Ascending aorta (tissue), 2 donors: ENCODE measurements at regions of chr2 and their contacts with region 1.

Region 1: GRCh38 chr2:176126929-176127773 is 2.4 kb upstream of the HOXD8 start:
- DNase-seq: peak in 1 of 2 donors; percentile 81
- H3K4me3 ChIP-seq: no peak overlapping the region
- H3K27ac ChIP-seq: no peak overlapping the region
- H3K4me1 ChIP-seq: peaks cover 10 to 17% of the 10 kb centered on the region in 2 donors
- H3K27me3 ChIP-seq: no peaks in the 10 kb centered on the region
- CTCF ChIP-seq: peak; percentile 78 to 89 (median 86)

Region 2: GRCh38 chr2:174797781-174798276 is 1329.3 kb before region 1 on chr2:
- intact Hi-C with region 1: no loop called
- DNase-seq: no peak
- H3K4me3 ChIP-seq: no peak overlapping the region
- H3K27ac ChIP-seq: no peak overlapping the region
- H3K4me1 ChIP-seq: no peaks in the 10 kb centered on the region
- H3K27me3 ChIP-seq: no peaks in the 10 kb centered on the region
- CTCF ChIP-seq: no peak

Region 3: GRCh38 chr2:176079831-176080539 is 47.2 kb before region 1 on chr2:
- intact Hi-C with region 1: loop called (anchors 5 kb)
- DNase-seq: no peak
- H3K4me3 ChIP-seq: peak overlapping the region; percentile 28 to 37
- H3K27ac ChIP-seq: no peak overlapping the region
- H3K4me1 ChIP-seq: no peaks in the 10 kb centered on the region
- H3K27me3 ChIP-seq: peaks cover 75% of the 10 kb centered on the region
- CTCF ChIP-seq: peak; percentile 36 to 58 (median 54)

Region 4: DNA sequence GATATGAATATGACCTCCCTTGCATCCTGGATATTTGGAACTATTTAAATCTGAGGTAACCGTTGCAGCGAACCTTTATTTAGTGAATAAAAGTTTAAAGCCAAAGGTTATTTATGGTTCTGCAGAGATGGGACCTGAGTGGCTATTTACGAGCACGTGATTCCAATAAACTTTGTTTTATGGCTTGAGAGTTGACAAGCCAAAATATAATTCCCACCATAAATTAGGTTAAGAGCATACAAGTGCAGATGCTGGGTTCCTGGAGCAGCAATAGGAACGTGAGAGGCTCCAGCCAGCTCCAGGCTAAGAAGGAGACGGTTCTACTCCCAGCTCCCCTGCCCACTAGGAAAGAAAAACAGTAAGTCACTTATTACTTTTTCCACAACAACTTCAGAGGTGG is 18.9 kb after region 1 on chr2:
- intact Hi-C with region 1: no loop called
- DNase-seq: no peak
- H3K4me3 ChIP-seq: no peak overlapping the region
- H3K27ac ChIP-seq: no peak overlapping the region
- H3K4me1 ChIP-seq: no peaks in the 10 kb centered on the region
- H3K27me3 ChIP-seq: no peaks in the 10 kb centered on the region
- CTCF ChIP-seq: no peak

Region 5: DNA sequence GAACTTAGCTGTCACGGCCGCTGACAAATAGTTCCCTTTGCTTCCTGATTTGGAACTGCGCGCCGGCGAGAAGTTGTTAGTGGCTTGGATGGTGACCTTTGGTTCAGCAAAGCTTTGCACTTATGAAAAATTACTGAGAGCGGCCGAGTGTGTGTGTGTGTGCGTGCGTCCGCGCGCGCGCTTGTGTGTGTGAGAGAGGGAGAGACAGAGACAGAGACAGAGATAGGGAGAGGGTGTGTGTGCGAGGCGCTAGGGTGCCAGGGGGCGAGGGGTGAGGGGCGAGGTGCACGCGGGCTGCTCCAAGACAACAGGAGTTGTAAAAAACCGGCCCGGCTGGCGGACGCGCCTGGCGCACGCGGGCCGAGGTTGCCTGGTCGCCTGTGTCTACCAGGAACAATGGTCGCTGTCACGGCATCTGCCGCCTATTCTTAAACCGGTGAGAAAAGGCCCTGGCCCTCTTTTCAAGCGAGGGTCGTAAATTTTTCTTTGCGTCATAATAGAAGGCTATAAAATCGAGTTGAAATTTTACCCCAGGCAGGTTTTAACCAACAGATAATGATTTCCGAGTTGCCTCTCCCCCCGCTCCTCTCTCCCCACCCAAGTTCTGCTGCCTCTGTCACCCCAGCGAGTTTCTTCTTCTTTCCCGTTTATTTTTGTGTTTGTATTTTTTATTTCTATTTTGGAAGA is 30.5 kb after region 1 on chr2:
- intact Hi-C with region 1: no loop called
- DNase-seq: no peak
- H3K4me3 ChIP-seq: no peak overlapping the region
- H3K27ac ChIP-seq: no peak overlapping the region
- H3K4me1 ChIP-seq: peaks cover 0 to 11% of the 10 kb centered on the region in 2 donors
- H3K27me3 ChIP-seq: peaks cover 19% of the 10 kb centered on the region
- CTCF ChIP-seq: no peak

Region 6: GRCh38 chr2:176638167-176639015 is 511.2 kb after region 1 on chr2:
- intact Hi-C with region 1: loop called (anchors 1 kb)
- DNase-seq: peak in 1 of 2 donors; percentile 78
- H3K4me3 ChIP-seq: peak overlapping the region; percentile 77 to 83
- H3K27ac ChIP-seq: peak overlapping the region in 1 of 2 donors; percentile 56
- H3K4me1 ChIP-seq: peaks cover 3 to 5% of the 10 kb centered on the region in 2 donors
- H3K27me3 ChIP-seq: no peaks in the 10 kb centered on the region
- CTCF ChIP-seq: peak; percentile 30 to 63 (median 60)

Region 7: GRCh38 chr2:176653479-176654443 is 526.6 kb after region 1 on chr2:
- intact Hi-C with region 1: loop called (anchors 2 kb)
- DNase-seq: no peak
- H3K4me3 ChIP-seq: no peak overlapping the region
- H3K27ac ChIP-seq: no peak overlapping the region
- H3K4me1 ChIP-seq: no peaks in the 10 kb centered on the region
- H3K27me3 ChIP-seq: no peaks in the 10 kb centered on the region
- CTCF ChIP-seq: peak; percentile 42 to 65 (median 55)

Region 8: GRCh38 chr2:176814306-176815052 is 687.3 kb after region 1 on chr2:
- intact Hi-C with region 1: loop called (anchors 5 kb)
- DNase-seq: no peak
- H3K4me3 ChIP-seq: no peak overlapping the region
- H3K27ac ChIP-seq: no peak overlapping the region
- H3K4me1 ChIP-seq: peaks cover 0 to 9% of the 10 kb centered on the region in 2 donors
- H3K27me3 ChIP-seq: no peaks in the 10 kb centered on the region
- CTCF ChIP-seq: peak; percentile 45 to 72 (median 61)

Region 9: DNA sequence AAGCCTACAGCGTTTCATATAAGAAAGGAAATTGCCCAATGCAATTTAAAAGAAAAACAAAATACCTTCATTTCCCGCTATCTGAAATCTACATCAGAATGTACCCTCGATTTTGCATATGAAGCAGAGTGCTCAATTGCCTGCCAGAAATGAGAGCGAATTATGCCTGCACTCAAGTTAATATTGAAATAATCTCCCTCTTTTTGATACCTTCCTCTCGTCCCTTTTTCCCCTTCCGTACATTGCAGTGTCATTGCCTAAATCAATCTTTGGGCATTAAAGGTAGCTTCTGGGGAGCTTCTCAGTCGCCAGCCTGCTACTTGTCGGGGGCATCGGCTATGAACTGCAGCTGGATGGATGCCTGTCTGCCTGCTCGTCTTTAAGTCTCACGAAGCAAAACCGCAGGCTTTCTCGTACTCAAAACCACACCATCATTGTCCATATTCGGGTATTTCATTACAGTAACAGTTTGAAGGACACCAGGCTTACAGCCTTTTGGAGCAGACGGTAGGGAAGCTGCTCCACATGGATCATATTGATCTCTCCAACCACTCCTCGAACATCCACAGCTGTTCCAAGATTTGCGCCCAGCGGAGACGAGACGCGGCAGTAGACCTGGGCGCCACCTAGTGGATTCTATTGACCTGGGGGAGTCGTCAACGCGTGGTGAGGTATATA is 1021.5 kb after region 1 on chr2:
- intact Hi-C with region 1: loop called (anchors 5 kb)
- DNase-seq: peak in 1 of 2 donors; percentile 83
- H3K4me3 ChIP-seq: peak overlapping the region; percentile 24 to 65
- H3K27ac ChIP-seq: no peak overlapping the region
- H3K4me1 ChIP-seq: peaks cover 0 to 4% of the 10 kb centered on the region in 2 donors
- H3K27me3 ChIP-seq: peaks cover 4% of the 10 kb centered on the region
- CTCF ChIP-seq: peak; percentile 25 to 74 (median 73)